PC-3 (cell line): ENCODE measurements at regions of chr15 and their contacts with region 1.

Region 1: DNA sequence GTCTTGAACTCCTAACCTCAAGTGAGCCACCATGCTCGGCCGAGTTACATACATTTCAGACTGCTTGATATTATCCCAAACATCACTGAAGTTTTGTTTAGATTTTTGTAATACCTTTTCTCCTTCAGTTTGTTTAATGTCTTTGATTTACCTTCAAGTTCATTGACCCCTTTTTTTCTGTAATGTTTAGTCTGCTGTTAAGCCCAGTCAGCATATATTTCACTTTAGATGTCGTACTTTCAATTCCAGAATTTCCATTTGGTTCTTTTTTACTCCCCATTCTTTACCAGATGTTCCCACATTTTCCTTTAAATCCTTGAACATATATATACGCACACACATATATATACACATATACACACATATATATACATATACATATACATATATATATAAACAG is 59.1 kb upstream of the CTDSPL2 start:
- DNase-seq: no peak
- ATAC-seq: no peak
- H3K4me3 ChIP-seq: no peak overlapping the region
- H3K27ac ChIP-seq: no peak overlapping the region
- H3K4me1 ChIP-seq: no peaks in the 10 kb centered on the region
- H3K27me3 ChIP-seq: no peaks in the 10 kb centered on the region
- CTCF ChIP-seq: no peak

Region 2: GRCh38 chr15:44215594-44215993 is 152.8 kb before region 1 on chr15:
- CTCF ChIA-PET with region 1: no interaction called
- POLR2A ChIA-PET with region 1: no interaction called
- intact Hi-C with region 1: no loop called
- DNase-seq: peak; percentile 97
- ATAC-seq: peak; percentile 97
- H3K4me3 ChIP-seq: no peak overlapping the region
- H3K27ac ChIP-seq: peak overlapping the region; percentile 67
- H3K4me1 ChIP-seq: peaks cover 20% of the 10 kb centered on the region
- H3K27me3 ChIP-seq: no peaks in the 10 kb centered on the region
- CTCF ChIP-seq: no peak

Region 3: DNA sequence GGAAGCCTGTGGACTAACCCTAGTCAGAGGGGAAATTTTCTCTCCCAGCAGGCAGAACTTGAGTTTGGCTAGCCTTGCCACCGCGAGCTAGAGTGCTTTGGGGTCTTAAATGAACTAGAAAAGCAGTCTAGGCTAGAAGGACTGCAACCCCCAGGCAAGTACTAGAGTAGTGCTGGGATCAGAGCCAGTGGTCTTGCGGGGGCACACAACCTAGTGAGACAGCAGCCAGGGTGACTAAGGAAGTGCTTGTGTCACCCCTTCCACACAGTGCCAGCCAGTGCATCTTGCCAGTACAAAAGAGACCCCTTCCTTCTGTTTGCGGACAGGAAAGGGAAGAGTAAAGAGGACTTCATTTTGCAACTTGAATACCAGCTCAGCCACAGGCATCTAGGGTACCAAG is 20.9 kb before region 1 on chr15:
- CTCF ChIA-PET with region 1: no interaction called
- POLR2A ChIA-PET with region 1: interaction called, 12 read pairs
- intact Hi-C with region 1: no loop called
- DNase-seq: no peak
- ATAC-seq: no peak
- H3K4me3 ChIP-seq: no peak overlapping the region
- H3K27ac ChIP-seq: no peak overlapping the region
- H3K4me1 ChIP-seq: no peaks in the 10 kb centered on the region
- H3K27me3 ChIP-seq: no peaks in the 10 kb centered on the region
- CTCF ChIP-seq: no peak